ENCODE measurements at regions of chr6 and their contacts with region 1.

Region 1: GRCh38 chr6:71190809-71191208 is 97.8 kb upstream of the OGFRL1 start:
- DNase-seq: peak; percentile 11
- ATAC-seq: no peak
- H3K4me3 ChIP-seq: no peak overlapping the region
- H3K27ac ChIP-seq: no peak overlapping the region
- H3K4me1 ChIP-seq: no peaks in the 10 kb centered on the region
- H3K27me3 ChIP-seq: no peaks in the 10 kb centered on the region
- CTCF ChIP-seq: no peak
- EP300 ChIP-seq: no peak
- POLR2A ChIP-seq: no peak
- RAD21 ChIP-seq: no peak

Region 2: GRCh38 chr6:71248306-71248765 is 57.5 kb after region 1 on chr6:
- CTCF ChIA-PET with region 1: no interaction called
- POLR2A ChIA-PET with region 1: no interaction called
- in situ Hi-C with region 1: no loop called
- intact Hi-C with region 1: no loop called
- DNase-seq: peak; percentile 4
- ATAC-seq: no peak
- H3K4me3 ChIP-seq: no peak overlapping the region
- H3K27ac ChIP-seq: no peak overlapping the region
- H3K4me1 ChIP-seq: no peaks in the 10 kb centered on the region
- H3K27me3 ChIP-seq: no peaks in the 10 kb centered on the region
- CTCF ChIP-seq: no peak
- EP300 ChIP-seq: no peak
- POLR2A ChIP-seq: no peak
- RAD21 ChIP-seq: no peak

Region 3: GRCh38 chr6:71342772-71343171 is 152.0 kb after region 1 on chr6:
- CTCF ChIA-PET with region 1: no interaction called
- POLR2A ChIA-PET with region 1: no interaction called
- in situ Hi-C with region 1: loop called (anchors 5 kb)
- intact Hi-C with region 1: no loop called
- DNase-seq: no peak
- ATAC-seq: no peak
- H3K4me3 ChIP-seq: no peak overlapping the region
- H3K27ac ChIP-seq: no peak overlapping the region
- H3K4me1 ChIP-seq: no peaks in the 10 kb centered on the region
- H3K27me3 ChIP-seq: no peaks in the 10 kb centered on the region
- CTCF ChIP-seq: no peak
- EP300 ChIP-seq: no peak
- POLR2A ChIP-seq: no peak
- RAD21 ChIP-seq: no peak

Measured in HepG2 (cell line).